CD4-positive, alpha-beta memory T cell (primary cell): ENCODE measurements at regions of chr20 and their contacts with region 1.

Region 1: GRCh38 chr20:17968366-17969279 is at the starts of genes MGME1 and SNX5:
- DNase-seq: peak; percentile 99 to 100 (median 99)
- H3K4me3 ChIP-seq: peak within 1 kb of the TSS; percentile 90 to 95
- H3K4me3 Mint-ChIP-seq: peak within 1 kb of the TSS; percentile 86 to 97 (median 94)
- H3K27ac ChIP-seq: peak within 1 kb of the TSS; percentile 82
- H3K27ac Mint-ChIP-seq: peak within 1 kb of the TSS; percentile 97 to 99 (median 98)
- H3K4me1 ChIP-seq: peaks cover 66% of the 10 kb centered on the region
- H3K4me1 Mint-ChIP-seq: peaks cover 51 to 92% (median 63%) of the 10 kb centered on the region in 4 donors
- H3K27me3 ChIP-seq: no peaks in the 10 kb centered on the region
- H3K27me3 Mint-ChIP-seq: peaks cover 0 to 1% of the 10 kb centered on the region in 2 donors
- total RNA-seq, gene MGME1: 15.4 to 16.5 TPM
- total RNA-seq, gene SNX5: 81.5 to 81.6 TPM

Region 2: GRCh38 chr20:16729565-16730456 is 1238.8 kb before region 1 on chr20 and contains the start of gene SNRPB2:
- CTCF ChIA-PET with region 1: no interaction called
- POLR2A ChIA-PET with region 1: no interaction called
- intact Hi-C with region 1: loop called (anchors 5 kb)
- DNase-seq: peak; percentile 88 to 95 (median 90)
- H3K4me3 ChIP-seq: peak within 1 kb of the TSS; percentile 89 to 98
- H3K4me3 Mint-ChIP-seq: peak within 1 kb of the TSS; percentile 99 to 100 (median 100)
- H3K27ac ChIP-seq: peak within 1 kb of the TSS; percentile 96
- H3K27ac Mint-ChIP-seq: peak within 1 kb of the TSS; percentile 96 to 100 (median 100)
- H3K4me1 ChIP-seq: peaks cover 52% of the 10 kb centered on the region
- H3K4me1 Mint-ChIP-seq: peaks cover 41 to 59% (median 51%) of the 10 kb centered on the region in 4 donors
- H3K27me3 ChIP-seq: peaks cover 4% of the 10 kb centered on the region
- H3K27me3 Mint-ChIP-seq: peaks cover 7% of the 10 kb centered on the region in 2 donors
- total RNA-seq, gene SNRPB2: 45.6 to 49.0 TPM

Region 3: DNA sequence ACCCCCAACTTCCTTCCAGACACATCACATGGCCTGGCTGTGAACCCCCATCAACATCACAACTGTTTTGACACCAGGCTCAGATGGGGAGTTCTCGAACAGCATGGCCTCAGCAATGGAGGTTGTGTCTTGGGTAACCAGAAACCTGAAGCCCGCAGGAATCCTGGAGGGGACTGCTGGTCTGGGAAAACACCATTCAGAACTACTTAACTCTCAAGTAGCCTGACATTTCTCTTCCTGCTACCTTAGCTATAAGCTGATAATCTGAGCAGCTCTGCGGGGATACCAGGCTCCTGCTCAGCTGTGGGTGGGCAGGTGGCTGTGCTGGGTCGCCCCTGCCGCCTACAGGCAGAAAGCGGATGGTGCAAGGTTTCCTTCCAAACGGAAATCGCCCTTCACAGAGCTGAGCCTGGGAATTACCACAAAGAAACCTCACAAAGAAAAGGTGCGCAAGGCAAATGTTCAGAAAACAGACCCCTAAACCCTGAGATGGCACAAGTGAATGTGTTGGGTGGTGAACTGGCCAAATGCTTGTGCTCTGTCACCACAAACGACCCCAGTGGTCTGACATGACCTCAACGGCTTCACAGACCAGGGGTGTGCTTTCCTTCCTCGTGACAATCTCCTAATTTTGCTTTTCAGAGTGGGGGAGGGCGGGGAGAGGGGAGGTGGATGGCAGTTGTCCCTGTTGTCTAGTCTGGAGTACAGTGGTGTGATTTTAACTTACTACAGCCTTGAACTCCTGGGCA is 29.6 kb before region 1 on chr20:
- CTCF ChIA-PET with region 1: interaction called, 51 read pairs
- POLR2A ChIA-PET with region 1: interaction called, 20 read pairs
- intact Hi-C with region 1: loop called (anchors 2 kb)
- DNase-seq: peak; percentile 33 to 56 (median 48)
- H3K4me3 ChIP-seq: no peak overlapping the region
- H3K4me3 Mint-ChIP-seq: peak overlapping the region in 5 of 8 donors; percentile 20 to 62 (median 47)
- H3K27ac ChIP-seq: no peak overlapping the region
- H3K27ac Mint-ChIP-seq: peak overlapping the region in 4 of 7 donors; percentile 27 to 62 (median 37)
- H3K4me1 ChIP-seq: peaks cover 13% of the 10 kb centered on the region
- H3K4me1 Mint-ChIP-seq: peaks cover 4 to 14% (median 11%) of the 10 kb centered on the region in 4 donors
- H3K27me3 ChIP-seq: no peaks in the 10 kb centered on the region
- H3K27me3 Mint-ChIP-seq: no peaks in the 10 kb centered on the region

Region 4: DNA sequence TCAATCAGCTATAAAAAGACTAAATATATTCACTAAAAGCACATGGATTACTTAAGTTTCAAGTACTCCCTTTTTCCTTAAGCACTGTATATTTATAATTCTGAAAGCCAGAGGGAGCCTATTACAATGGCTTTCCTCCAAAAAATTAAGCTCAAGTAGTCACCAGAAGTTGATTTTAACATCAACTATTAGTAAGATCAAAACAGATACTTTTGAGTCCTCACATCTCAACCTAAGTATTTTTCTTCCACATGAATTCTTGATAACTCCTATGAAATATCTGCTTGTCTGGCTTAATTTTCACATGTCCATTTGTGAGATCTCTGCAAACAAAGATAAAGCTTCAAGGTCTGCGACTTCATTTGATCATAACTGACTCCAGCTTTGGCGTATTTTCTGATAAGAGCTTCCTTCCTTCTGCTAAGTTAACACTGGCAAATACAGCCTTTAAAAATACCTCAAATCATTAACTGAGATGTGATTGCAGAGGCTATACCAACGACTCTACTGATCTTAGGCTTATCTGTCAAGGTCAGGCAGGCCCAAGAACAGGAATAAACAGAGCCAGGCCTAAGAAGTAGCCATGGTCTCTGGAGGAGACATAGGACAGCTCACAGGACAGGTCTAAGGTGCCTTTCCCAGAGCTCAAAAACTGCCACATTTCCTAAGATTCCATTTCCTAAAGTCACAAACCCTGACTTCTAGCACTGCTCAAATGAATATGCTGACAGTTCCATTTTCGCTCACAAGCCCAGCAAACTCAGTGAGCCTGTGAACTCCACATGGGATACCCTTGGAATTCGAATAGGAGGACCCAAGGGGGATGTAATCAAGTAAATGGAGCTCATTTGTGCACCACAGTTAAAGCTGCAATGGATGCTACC is 10.0 kb before region 1 on chr20:
- CTCF ChIA-PET with region 1: interaction called, 37 read pairs
- POLR2A ChIA-PET with region 1: interaction called, 72 read pairs
- intact Hi-C with region 1: loop called (anchors 1 kb)
- DNase-seq: no peak
- H3K4me3 ChIP-seq: peak overlapping the region in 1 of 2 donors; percentile 4
- H3K4me3 Mint-ChIP-seq: peak overlapping the region in 6 of 8 donors; percentile 36 to 76 (median 66)
- H3K27ac ChIP-seq: peak overlapping the region; percentile 33
- H3K27ac Mint-ChIP-seq: peak overlapping the region; percentile 26 to 99 (median 82)
- H3K4me1 ChIP-seq: peaks cover 84% of the 10 kb centered on the region
- H3K4me1 Mint-ChIP-seq: peaks cover 54 to 83% (median 72%) of the 10 kb centered on the region in 4 donors
- H3K27me3 ChIP-seq: no peaks in the 10 kb centered on the region
- H3K27me3 Mint-ChIP-seq: no peaks in the 10 kb centered on the region

Region 5: GRCh38 chr20:18137412-18138265 is 169.0 kb after region 1 on chr20 and contains the starts of genes KAT14 and PET117:
- CTCF ChIA-PET with region 1: no interaction called
- POLR2A ChIA-PET with region 1: interaction called, 36 read pairs
- intact Hi-C with region 1: loop called (anchors 1 kb)
- DNase-seq: peak; percentile 89 to 95 (median 92)
- H3K4me3 ChIP-seq: peak within 1 kb of the TSS; percentile 71 to 87
- H3K4me3 Mint-ChIP-seq: peak within 1 kb of the TSS; percentile 88 to 94 (median 90)
- H3K27ac ChIP-seq: peak within 1 kb of the TSS; percentile 78
- H3K27ac Mint-ChIP-seq: peak within 1 kb of the TSS; percentile 89 to 96 (median 92)
- H3K4me1 ChIP-seq: peaks cover 34% of the 10 kb centered on the region
- H3K4me1 Mint-ChIP-seq: peaks cover 22 to 43% (median 30%) of the 10 kb centered on the region in 4 donors
- H3K27me3 ChIP-seq: no peaks in the 10 kb centered on the region
- H3K27me3 Mint-ChIP-seq: no peaks in the 10 kb centered on the region
- total RNA-seq, gene KAT14: 22.4 to 24.0 TPM
- total RNA-seq, gene PET117: 14.1 to 15.0 TPM

Region 6: DNA sequence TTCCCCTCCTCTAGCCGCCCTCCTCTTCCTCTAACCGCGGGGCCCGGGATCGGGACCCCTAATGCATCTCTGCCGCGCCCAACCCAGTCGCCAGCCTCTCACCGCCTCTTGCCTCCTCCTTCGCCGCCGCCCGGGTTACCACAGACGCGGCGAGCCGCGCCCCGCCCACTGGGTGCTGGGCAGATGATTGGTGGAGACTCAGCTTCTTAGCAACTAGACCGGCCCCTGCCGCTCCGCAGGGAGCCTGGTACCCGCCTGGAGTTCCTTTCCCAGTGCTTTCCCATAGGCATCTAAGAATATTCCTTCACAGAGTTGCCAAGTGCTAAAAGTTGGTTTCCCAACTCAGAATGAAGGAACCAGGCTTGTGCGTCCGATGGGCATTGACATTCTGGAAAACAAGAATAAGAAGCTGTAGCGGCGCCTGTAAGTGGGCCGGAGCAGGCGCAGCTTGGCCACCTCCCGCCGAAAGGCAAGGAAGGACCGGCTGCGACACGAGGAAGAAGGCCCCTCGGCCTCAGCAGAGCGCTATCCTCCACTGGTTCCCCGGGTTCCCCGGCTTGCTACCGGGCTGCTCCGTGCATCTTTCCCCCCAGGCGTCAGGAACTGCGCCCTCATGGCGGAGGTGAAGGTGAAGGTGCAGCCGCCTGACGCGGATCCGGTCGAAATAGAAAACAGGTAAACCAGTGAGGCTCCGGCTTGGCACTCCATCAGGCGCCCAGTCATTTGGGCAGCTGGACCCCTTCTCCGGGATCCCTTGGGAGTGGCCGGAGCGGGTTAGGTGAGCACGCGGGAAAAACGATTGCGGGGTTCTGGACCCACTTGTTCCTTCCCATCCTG is 498.5 kb after region 1 on chr20 and contains the starts of genes DZANK1 and POLR3F:
- CTCF ChIA-PET with region 1: no interaction called
- POLR2A ChIA-PET with region 1: no interaction called
- intact Hi-C with region 1: loop called (anchors 2 kb)
- DNase-seq: peak; percentile 92 to 94 (median 93)
- H3K4me3 ChIP-seq: peak within 1 kb of the TSS; percentile 94 to 99
- H3K4me3 Mint-ChIP-seq: peak within 1 kb of the TSS; percentile 90 to 100 (median 96)
- H3K27ac ChIP-seq: peak within 1 kb of the TSS; percentile 78
- H3K27ac Mint-ChIP-seq: peak within 1 kb of the TSS; percentile 92 to 100 (median 99)
- H3K4me1 ChIP-seq: peaks cover 18% of the 10 kb centered on the region
- H3K4me1 Mint-ChIP-seq: peaks cover 9 to 37% (median 23%) of the 10 kb centered on the region in 4 donors
- H3K27me3 ChIP-seq: no peaks in the 10 kb centered on the region
- H3K27me3 Mint-ChIP-seq: no peaks in the 10 kb centered on the region
- total RNA-seq, gene DZANK1: 2.7 to 3.0 TPM
- total RNA-seq, gene POLR3F: 7.8 to 9.1 TPM

Region 7: DNA sequence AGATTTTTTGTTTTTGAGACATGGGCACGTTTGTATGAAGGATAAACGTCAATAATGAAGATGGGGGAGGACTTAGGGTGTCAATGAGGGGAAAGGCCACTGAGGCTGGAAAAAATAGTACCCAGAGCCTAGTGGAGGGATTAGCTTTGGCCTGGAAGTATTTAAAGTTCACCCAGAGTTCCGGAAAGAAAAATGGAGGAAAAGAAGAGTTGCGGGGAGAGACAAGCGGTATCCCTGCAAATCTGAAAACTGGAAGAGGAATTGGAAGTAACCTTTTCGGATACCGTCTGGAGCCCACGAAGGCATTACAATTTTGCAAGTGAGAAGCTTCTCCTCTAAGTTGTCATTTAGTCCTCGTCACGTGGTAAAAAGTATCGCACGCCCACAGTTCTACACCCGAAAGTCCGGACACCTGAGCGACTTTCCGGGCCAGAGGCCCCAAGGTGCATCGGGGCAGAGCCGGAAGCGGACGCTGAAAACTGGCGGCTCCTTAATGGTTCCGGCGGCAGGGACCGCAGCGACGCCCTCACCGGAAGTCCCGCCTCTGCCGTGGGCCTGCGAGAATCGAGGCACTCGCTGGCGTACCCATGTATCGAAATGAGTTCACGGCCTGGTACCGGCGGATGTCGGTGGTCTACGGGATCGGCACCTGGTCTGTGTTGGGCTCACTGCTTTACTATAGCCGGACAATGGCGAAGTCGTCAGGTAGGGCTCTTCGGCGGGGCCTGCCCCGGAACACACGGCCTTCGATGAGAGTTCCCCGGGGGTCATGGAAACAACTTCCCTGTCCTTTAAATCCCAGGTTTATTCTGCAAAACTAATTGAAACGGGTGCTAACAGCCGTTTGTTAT is 598.5 kb after region 1 on chr20 and contains the start of gene SMIM26:
- CTCF ChIA-PET with region 1: no interaction called
- POLR2A ChIA-PET with region 1: no interaction called
- intact Hi-C with region 1: loop called (anchors 1 kb)
- DNase-seq: peak; percentile 92 to 94 (median 93)
- H3K4me3 ChIP-seq: peak within 1 kb of the TSS; percentile 77 to 78
- H3K4me3 Mint-ChIP-seq: peak within 1 kb of the TSS; percentile 94 to 99 (median 97)
- H3K27ac ChIP-seq: peak within 1 kb of the TSS; percentile 96
- H3K27ac Mint-ChIP-seq: peak within 1 kb of the TSS; percentile 93 to 100 (median 99)
- H3K4me1 ChIP-seq: peaks cover 13% of the 10 kb centered on the region
- H3K4me1 Mint-ChIP-seq: peaks cover 9 to 34% (median 14%) of the 10 kb centered on the region in 4 donors
- H3K27me3 ChIP-seq: no peaks in the 10 kb centered on the region
- H3K27me3 Mint-ChIP-seq: no peaks in the 10 kb centered on the region
- total RNA-seq, gene SMIM26: 60.2 to 64.2 TPM